GM10248 (cell line): ENCODE measurements at regions of chr17 and their contacts with region 1.

Region 1: GRCh38 chr17:65231662-65232335 is 94.6 kb downstream of the RGS9 start:
- DNase-seq: peak; percentile 77
- CTCF ChIP-seq: peak; percentile 66

Region 2: GRCh38 chr17:65219124-65219523 is 12.7 kb before region 1 on chr17:
- CTCF ChIA-PET with region 1: interaction called, 12 read pairs
- POLR2A ChIA-PET with region 1: no interaction called
- DNase-seq: no peak
- CTCF ChIP-seq: peak; percentile 26

Region 3: DNA sequence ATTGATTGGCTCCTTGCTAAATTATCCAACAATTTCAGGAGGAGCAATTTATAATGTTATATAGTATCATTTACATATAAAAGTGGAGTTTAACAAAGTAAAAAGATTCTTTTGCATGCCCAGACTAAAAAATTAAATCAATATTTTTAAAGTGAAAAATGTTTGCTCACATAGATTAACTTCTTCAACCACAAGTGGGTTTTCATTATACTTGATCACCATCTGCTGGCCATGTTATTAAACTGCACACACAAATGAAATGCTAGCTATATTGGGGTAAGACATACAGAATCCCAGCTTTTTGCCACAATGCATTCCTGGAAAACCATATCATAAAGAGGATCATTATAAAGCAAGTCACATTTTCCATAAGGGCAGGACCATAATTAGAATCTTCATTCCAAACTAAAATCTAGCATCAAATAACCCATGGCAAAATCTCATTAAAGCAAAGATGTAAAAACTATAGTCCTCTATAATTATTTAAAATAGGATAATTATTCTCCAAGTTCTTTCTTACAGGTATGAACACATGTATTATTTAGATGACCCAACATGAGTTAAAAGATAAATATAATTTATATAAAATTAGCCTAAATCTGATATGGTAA is 933.8 kb after region 1 on chr17:
- CTCF ChIA-PET with region 1: interaction called, 41 read pairs
- POLR2A ChIA-PET with region 1: no interaction called
- DNase-seq: peak; percentile 44
- CTCF ChIP-seq: peak; percentile 53